ENCODE measurements at regions of chr2 and their contacts with region 1.

Region 1: DNA sequence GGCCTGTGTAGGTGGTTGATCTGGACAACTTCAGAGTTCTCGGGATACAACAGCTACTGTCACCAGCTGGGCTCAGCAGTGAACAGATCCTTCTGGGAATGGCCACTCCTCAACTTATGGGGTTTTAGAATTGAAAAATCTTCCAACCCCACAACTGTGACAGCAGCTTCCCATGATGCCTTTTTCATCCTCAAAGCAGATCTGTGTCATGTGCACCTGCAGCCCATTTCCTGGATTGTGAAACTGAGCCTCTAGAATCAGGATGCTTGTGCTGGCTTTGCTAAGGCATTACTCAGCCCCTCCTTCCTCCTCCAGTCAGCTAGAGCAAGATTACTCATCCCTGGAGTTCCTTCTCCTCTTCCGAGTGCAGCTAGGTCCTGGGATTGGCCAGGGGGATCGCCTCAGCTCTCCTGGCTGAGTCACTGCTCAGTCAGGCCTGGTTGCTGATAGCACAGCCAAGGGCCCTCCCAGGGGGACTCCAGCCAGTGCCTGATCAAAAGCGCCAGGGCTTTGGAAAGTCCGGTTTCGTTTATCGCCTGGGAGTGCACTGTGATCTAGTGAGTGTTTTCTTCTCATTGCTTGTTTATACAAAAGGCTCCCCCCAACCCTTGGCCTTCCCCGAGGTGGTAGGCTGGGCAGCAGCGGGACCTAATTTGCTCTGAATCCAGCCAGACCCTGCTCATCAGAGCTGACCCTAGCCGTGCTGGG is 2.4 kb upstream of the LPIN1 start:
- DNase-seq: peak; percentile 90
- ATAC-seq: peak; percentile 79
- H3K4me3 ChIP-seq: peak overlapping the region; percentile 51 to 71 (median 59)
- H3K27ac ChIP-seq: peak overlapping the region; percentile 34
- H3K4me1 ChIP-seq: peaks cover 74% of the 10 kb centered on the region
- H3K27me3 ChIP-seq: peaks cover 0 to 5% of the 10 kb centered on the region in 2 experiments; a peak in 2 of 5 replicates
- CTCF ChIP-seq: peak; percentile 41; the same call in 1 of the 2 replicates
- EP300 ChIP-seq: peak; percentile 50 to 71; a peak in 2 of 4 replicates
- POLR2A ChIP-seq: peak in 1 of 2 experiments; percentile 51; a peak in 3 of 4 replicates
- RAD21 ChIP-seq: no peak

Region 2: DNA sequence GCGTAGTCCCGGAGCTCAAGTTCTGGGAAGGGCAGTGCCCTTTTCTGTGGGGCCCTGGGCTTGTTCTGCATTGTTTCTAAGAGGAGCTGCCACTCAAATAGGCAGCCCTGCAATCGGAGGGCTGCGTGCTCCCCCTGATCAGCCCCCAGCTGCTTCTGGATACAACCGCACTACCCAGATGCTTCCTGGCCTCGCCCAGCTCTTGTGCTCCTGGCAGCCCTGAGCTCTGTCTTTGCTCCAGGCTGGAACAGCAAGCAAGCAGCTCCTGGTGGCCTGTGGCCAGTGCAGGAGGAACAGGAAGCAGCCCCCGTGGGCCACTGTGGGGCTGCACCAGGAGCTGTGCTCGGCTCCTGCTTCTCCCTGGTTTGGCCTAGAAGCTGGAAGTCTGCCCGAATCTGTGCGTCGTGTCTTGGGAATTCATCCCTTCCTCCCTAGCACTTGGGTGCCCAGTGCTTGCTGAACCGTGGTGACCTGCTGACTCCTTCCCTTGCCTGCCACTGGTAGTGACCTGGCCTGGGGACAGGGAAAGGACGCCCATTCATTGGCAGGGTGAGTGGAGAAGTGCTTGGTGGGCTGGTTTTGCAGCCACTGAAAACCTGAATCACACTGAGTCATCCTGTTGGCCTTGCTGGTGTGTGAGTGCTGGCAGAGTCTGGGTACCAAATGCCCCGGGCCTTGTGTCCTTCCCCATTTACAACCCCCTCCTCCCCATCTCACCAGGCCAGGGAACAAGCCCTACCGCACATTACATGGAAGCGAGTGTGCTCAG is 46.7 kb before region 1 on chr2:
- CTCF ChIA-PET with region 1: interaction called, 7 read pairs
- POLR2A ChIA-PET with region 1: interaction called, 16 read pairs
- in situ Hi-C with region 1: no loop called
- intact Hi-C with region 1: no loop called
- DNase-seq: no peak
- ATAC-seq: peak; percentile 12
- H3K4me3 ChIP-seq: no peak overlapping the region
- H3K27ac ChIP-seq: no peak overlapping the region
- H3K4me1 ChIP-seq: peaks cover 52% of the 10 kb centered on the region
- H3K27me3 ChIP-seq: peaks cover 5 to 7% of the 10 kb centered on the region in 2 experiments; a peak in 3 of 5 replicates
- CTCF ChIP-seq: no peak
- EP300 ChIP-seq: no peak
- POLR2A ChIP-seq: no peak
- RAD21 ChIP-seq: no peak

Region 3: DNA sequence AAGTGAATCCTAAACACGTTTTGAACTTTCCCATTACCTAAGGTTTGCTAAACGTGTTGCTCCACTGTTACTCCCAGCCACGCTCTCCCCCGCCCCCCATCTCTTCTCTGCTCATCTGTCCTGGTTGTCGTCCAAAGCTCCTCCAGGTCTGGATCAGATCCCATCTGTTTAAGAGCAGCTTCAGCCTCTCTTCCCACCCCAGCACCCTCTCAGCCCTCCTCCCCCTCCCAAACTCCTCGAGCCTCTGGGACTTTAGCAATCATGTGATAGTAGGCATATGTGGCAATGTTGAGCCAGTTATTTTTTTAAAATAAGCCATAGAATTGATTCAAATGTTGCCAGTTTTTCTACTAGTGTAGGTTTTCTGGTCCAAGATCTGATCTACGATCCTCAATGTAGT is 17.6 kb before region 1 on chr2:
- CTCF ChIA-PET with region 1: no interaction called
- POLR2A ChIA-PET with region 1: no interaction called
- in situ Hi-C with region 1: no loop called
- intact Hi-C with region 1: no loop called
- DNase-seq: no peak
- ATAC-seq: no peak
- H3K4me3 ChIP-seq: no peak overlapping the region
- H3K27ac ChIP-seq: no peak overlapping the region
- H3K4me1 ChIP-seq: peaks cover 13% of the 10 kb centered on the region
- H3K27me3 ChIP-seq: peaks cover 0 to 13% of the 10 kb centered on the region in 2 experiments; a peak in 2 of 5 replicates
- CTCF ChIP-seq: no peak
- EP300 ChIP-seq: no peak
- POLR2A ChIP-seq: no peak
- RAD21 ChIP-seq: no peak

Region 4: GRCh38 chr2:11778923-11779757 is 35.1 kb after region 1 on chr2:
- CTCF ChIA-PET with region 1: interaction called, 31 read pairs
- POLR2A ChIA-PET with region 1: interaction called, 3 read pairs
- in situ Hi-C with region 1: loop called (anchors 5 kb)
- intact Hi-C with region 1: no loop called
- DNase-seq: peak; percentile 62
- ATAC-seq: peak; percentile 100
- H3K4me3 ChIP-seq: 0 out of 6 replicates have a peak overlapping the region, but pooled peaks of 1 of the 3 experiments have one; percentile 8
- H3K27ac ChIP-seq: no peak overlapping the region
- H3K4me1 ChIP-seq: peaks cover 9% of the 10 kb centered on the region; the same call in 1 of the 2 replicates
- H3K27me3 ChIP-seq: no peaks in the 10 kb centered on the region
- CTCF ChIP-seq: peak; percentile 96
- EP300 ChIP-seq: no peak
- POLR2A ChIP-seq: no peak
- RAD21 ChIP-seq: peak; percentile 95

Measured in HepG2 (cell line).